ENCODE measurements at regions of chr1 and their contacts with region 1.

Region 1: GRCh38 chr1:235128456-235129328 is at the start of gene TOMM20:
- DNase-seq: peak; percentile 95
- ATAC-seq: peak; percentile 97
- H3K4me3 Mint-ChIP-seq: peak within 1 kb of the TSS; percentile 98
- H3K27ac Mint-ChIP-seq: peak within 1 kb of the TSS; percentile 98
- H3K4me1 Mint-ChIP-seq: peaks cover 20% of the 10 kb centered on the region
- H3K27me3 Mint-ChIP-seq: no peaks in the 10 kb centered on the region
- total RNA-seq, gene TOMM20: 81.2 to 95.5 TPM

Region 2: DNA sequence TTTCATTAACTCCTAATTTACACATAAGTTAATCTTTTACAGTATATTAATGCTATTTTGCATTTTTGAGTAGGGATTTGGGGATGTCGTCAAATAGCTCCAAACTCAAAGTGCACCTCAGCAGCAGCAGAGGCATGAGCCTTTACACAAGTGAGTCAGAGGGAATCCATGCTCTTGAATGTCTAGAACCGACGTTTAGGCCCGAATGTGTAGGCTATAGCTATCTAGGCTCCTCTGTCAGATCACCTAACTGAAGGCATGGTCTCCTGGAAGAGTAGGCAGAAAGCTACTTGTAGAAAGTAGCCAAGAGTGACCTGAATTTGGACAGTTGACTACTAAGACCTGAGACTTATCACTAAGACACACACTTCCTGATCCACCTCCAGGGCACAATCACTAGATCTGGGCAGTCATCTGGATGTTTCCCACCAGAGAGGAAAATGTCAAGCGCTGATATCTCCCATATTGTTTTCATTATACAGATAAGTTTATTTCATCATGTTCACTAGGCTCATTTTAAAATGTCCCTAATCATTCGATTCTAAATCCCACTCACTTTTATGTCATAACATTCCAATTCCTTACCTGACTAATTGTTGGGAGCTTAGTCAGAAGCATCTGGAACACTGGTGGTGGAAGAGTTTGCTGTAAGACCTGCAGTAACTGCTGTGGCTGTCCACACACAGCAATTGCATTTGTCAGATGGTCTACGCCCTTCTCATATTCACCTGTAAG is 15.3 kb before region 1 on chr1:
- POLR2A ChIA-PET with region 1: interaction called, 10 read pairs
- DNase-seq: no peak
- ATAC-seq: no peak
- H3K4me3 Mint-ChIP-seq: no peak overlapping the region
- H3K27ac Mint-ChIP-seq: no peak overlapping the region
- H3K4me1 Mint-ChIP-seq: peaks cover 2% of the 10 kb centered on the region
- H3K27me3 Mint-ChIP-seq: no peaks in the 10 kb centered on the region

Region 3: DNA sequence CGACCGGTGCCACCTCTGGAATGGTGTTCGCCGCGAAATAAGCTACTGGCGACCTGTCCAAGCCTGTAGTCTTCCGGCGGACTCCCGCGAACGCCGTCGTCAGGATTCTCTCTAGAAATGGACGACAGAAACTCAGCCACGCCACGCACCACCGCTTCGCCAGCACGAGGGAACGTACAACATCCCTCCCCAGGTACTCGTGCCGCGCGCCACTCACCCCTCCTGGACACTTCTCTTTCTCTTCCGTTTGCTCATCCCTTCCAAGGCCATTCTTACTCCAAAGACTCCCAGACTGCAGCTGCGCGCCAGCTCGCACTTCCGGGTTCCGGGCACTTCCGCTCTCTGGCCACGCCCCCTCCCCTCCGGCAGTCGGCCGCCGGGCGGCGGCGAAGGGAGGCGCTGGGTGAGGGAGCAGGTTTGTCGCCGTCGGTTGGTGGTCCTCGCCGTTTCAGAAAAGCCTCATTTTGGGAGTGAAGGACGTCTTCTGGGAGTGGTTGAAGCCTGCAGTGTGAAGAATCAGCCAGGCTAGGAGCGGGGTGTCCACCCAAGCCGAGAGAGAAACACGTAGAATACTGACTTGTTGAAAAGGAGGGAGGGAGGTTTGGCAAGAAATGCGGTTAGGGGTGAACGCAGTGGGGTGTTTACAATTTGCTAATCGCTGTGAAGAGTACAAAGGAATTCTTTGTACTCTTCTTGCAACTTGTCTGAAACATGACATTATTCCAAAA is 32.4 kb after region 1 on chr1 and contains the start of gene RBM34:
- POLR2A ChIA-PET with region 1: interaction called, 18 read pairs
- DNase-seq: peak; percentile 95
- ATAC-seq: peak; percentile 83
- H3K4me3 Mint-ChIP-seq: peak within 1 kb of the TSS; percentile 98
- H3K27ac Mint-ChIP-seq: peak within 1 kb of the TSS; percentile 97
- H3K4me1 Mint-ChIP-seq: peaks cover 13% of the 10 kb centered on the region
- H3K27me3 Mint-ChIP-seq: no peaks in the 10 kb centered on the region
- total RNA-seq, gene RBM34: 129 to 134 TPM

Measured in activated naive CD8-positive, alpha-beta T cell treated with anti-CD3 and anti-CD28 coated beads, Interleukin-2, amount 10 ng/mL, durations not matched to agents 7 days and 5 days (primary cell).